ENCODE measurements at regions of chr7 and their contacts with region 1.

Region 1: DNA sequence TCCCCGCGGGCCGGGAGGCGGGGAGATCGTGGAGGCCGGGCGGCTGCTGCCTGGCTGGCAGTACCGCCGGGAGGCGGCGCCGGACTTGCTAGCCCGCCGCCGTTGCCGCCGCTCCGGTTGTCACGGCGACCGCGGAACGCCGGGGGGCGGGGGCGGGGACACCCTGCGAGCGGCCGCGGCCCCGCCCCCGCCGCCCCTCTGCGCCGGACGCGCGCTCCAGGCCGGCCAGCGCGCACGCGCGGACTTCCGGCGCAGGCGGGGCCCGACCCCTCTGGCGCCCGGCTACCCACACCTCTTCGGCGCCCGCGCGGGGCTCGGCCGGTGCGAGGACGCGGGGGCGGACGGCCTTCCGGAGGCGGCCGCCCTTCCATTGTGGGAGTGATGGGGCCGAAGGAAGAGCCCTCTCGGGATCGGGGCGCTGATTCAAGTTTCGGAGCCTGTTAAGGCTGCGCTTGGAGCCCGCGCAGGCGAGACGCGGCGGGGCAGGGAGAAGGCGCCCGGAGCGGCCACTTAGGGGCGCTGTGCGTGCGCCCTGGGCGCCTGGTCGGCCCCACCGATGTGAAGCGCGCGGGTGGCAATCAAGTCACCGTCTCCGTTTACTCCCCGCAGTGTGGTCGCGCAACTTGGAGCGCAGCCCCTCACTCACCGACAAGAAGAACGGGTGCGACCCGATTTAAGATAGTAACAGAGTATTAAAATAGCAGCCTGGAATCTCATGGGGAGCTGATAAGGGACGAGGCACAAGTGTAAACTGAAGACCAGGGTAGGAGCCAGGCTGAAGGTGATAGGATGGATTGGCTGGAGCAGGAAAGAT is 448 bp upstream of the DPY19L1 start:
- DNase-seq: peak; percentile 91
- H3K4me3 Mint-ChIP-seq: peak overlapping the region; percentile 78
- H3K27ac Mint-ChIP-seq: peak overlapping the region; percentile 51
- H3K4me1 Mint-ChIP-seq: peaks cover 30% of the 10 kb centered on the region
- H3K27me3 Mint-ChIP-seq: no peaks in the 10 kb centered on the region

Region 2: DNA sequence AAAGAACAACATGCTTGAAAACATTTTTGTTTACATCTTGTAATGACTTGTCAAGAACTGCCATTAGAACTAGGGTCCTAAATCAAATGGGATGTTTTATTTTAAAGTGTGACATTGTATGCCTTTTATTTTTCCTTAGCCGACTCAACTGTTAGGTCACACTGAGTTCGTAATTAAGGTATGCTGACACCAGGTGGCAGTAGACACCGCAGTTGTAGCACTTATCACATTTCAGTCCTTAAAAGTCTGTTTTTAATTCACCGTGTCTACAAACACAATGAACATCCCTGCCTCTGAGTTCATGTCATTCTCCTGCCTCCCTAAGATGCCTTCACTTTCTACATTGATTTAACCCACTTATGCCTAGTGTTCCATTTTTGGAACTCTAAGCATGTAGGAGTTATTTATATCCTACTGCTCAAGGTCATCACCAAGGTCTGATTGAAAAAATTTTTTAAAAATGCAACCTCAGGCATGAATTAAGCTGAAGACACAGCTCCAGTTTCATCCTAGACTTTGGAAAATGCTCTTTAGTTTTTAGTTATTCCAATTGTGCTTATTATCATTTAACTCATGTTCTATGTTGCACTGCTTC is 946.3 kb before region 1 on chr7:
- CTCF ChIA-PET with region 1: no interaction called
- POLR2A ChIA-PET with region 1: no interaction called
- intact Hi-C with region 1: loop called (anchors 5 kb)
- DNase-seq: peak; percentile 15
- H3K4me3 Mint-ChIP-seq: no peak overlapping the region
- H3K27ac Mint-ChIP-seq: no peak overlapping the region
- H3K4me1 Mint-ChIP-seq: no peaks in the 10 kb centered on the region
- H3K27me3 Mint-ChIP-seq: no peaks in the 10 kb centered on the region

Region 3: GRCh38 chr7:34675749-34676374 is 361.9 kb before region 1 on chr7:
- CTCF ChIA-PET with region 1: no interaction called
- POLR2A ChIA-PET with region 1: no interaction called
- intact Hi-C with region 1: loop called (anchors 5 kb)
- DNase-seq: peak; percentile 37
- H3K4me3 Mint-ChIP-seq: no peak overlapping the region
- H3K27ac Mint-ChIP-seq: no peak overlapping the region
- H3K4me1 Mint-ChIP-seq: no peaks in the 10 kb centered on the region
- H3K27me3 Mint-ChIP-seq: no peaks in the 10 kb centered on the region

Region 4: GRCh38 chr7:34759452-34760125 is 278.1 kb before region 1 on chr7:
- CTCF ChIA-PET with region 1: no interaction called
- POLR2A ChIA-PET with region 1: no interaction called
- intact Hi-C with region 1: loop called (anchors 1 kb)
- DNase-seq: no peak
- H3K4me3 Mint-ChIP-seq: no peak overlapping the region
- H3K27ac Mint-ChIP-seq: no peak overlapping the region
- H3K4me1 Mint-ChIP-seq: no peaks in the 10 kb centered on the region
- H3K27me3 Mint-ChIP-seq: peaks cover 8% of the 10 kb centered on the region

Region 5: GRCh38 chr7:34900891-34901513 is 136.7 kb before region 1 on chr7:
- CTCF ChIA-PET with region 1: no interaction called
- POLR2A ChIA-PET with region 1: no interaction called
- intact Hi-C with region 1: loop called (anchors 2 kb)
- DNase-seq: peak; percentile 15
- H3K4me3 Mint-ChIP-seq: no peak overlapping the region
- H3K27ac Mint-ChIP-seq: no peak overlapping the region
- H3K4me1 Mint-ChIP-seq: peaks cover 2% of the 10 kb centered on the region
- H3K27me3 Mint-ChIP-seq: peaks cover 12% of the 10 kb centered on the region

Region 6: DNA sequence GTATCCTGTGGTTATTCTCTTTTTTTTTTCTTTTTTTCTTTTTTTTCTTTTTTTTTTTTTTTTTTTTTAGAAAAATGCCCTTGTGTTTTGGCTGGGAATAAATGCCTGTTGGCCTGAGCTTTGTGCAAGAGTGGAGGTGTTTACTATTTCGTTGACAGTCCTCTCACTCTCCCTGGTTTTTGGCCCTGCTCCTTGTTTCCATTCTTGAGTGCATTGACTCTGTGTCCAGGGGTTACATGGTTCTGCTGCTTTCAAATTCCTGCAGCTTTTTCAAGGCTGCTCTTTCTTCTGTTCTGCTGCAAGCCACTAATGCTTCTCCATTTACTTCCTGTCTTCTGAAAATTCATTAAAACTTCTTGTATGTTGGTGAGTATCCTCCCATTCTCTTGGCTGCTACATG is 275.8 kb after region 1 on chr7:
- CTCF ChIA-PET with region 1: no interaction called
- POLR2A ChIA-PET with region 1: no interaction called
- intact Hi-C with region 1: loop called (anchors 5 kb)
- DNase-seq: no peak
- H3K4me3 Mint-ChIP-seq: no peak overlapping the region
- H3K27ac Mint-ChIP-seq: no peak overlapping the region
- H3K4me1 Mint-ChIP-seq: no peaks in the 10 kb centered on the region
- H3K27me3 Mint-ChIP-seq: peaks cover 1% of the 10 kb centered on the region

Region 7: DNA sequence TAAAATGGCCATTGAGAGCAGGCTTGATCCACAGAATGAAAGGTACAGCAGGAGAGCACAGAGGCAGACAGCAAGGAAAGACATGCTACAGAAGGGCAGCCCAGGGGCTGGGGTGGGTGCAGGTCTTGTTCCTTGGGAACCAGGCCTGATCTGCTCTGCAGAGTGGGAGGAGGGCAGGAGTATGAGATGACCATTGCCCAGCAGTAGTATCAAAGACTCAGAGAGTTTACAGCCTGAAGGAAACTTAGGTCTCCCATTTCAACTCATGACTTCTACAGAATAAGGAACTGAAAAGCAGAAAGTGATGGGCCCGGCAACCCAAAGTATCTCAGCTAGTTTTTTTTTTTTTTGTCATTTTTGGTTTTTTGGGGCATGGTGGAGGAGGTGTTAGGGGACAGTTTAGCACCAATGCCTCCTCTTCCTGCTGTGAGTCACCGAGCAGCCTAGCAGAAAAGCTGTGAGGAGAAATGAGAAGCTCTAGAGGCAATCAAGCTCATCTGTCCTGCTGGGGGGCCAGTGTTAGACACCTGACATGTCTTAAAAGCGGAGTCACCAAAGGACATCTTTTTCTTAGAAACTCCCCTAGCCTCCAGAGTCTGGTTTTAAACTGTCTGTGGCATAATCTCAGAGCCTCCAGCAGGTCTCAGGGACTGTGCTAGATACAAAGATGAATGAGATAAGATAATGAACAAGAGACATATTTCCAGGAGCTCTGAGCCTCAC is 691.5 kb after region 1 on chr7:
- CTCF ChIA-PET with region 1: no interaction called
- POLR2A ChIA-PET with region 1: no interaction called
- intact Hi-C with region 1: loop called (anchors 10 kb)
- DNase-seq: peak; percentile 68
- H3K4me3 Mint-ChIP-seq: no peak overlapping the region
- H3K27ac Mint-ChIP-seq: peak overlapping the region; percentile 15
- H3K4me1 Mint-ChIP-seq: peaks cover 61% of the 10 kb centered on the region
- H3K27me3 Mint-ChIP-seq: peaks cover 3% of the 10 kb centered on the region

Measured in activated CD4-positive, alpha-beta memory T cell treated with anti-CD3 and anti-CD28 coated beads for 36 hours (primary cell).